ENCODE measurements at regions of chr6 and their contacts with region 1.

Region 1: GRCh38 chr6:52788478-52788877 is 15.1 kb downstream of the GSTA1 start:
- DNase-seq: no peak
- H3K4me3 ChIP-seq: no peak overlapping the region
- H3K27ac ChIP-seq: peak overlapping the region in 1 of 4 donors; percentile 20
- H3K4me1 ChIP-seq: no peaks in the 10 kb centered on the region
- H3K27me3 ChIP-seq: no peaks in the 10 kb centered on the region
- CTCF ChIP-seq: no peak
- EP300 ChIP-seq: no peak
- POLR2A ChIP-seq: no peak

Region 2: GRCh38 chr6:52829046-52829817 is 40.8 kb after region 1 on chr6:
- in situ Hi-C with region 1: loop called in 2 of 4 experiments (anchors 5 kb)
- intact Hi-C with region 1: loop called (anchors 2 kb)
- DNase-seq: no peak
- H3K4me3 ChIP-seq: no peak overlapping the region
- H3K27ac ChIP-seq: no peak overlapping the region
- H3K4me1 ChIP-seq: no peaks in the 10 kb centered on the region
- H3K27me3 ChIP-seq: no peaks in the 10 kb centered on the region
- CTCF ChIP-seq: no peak
- EP300 ChIP-seq: no peak
- POLR2A ChIP-seq: no peak

Measured in transverse colon (tissue), 4 donors.